AG04450 (cell line): ENCODE measurements at regions of chr12 and their contacts with region 1.

Region 1: DNA sequence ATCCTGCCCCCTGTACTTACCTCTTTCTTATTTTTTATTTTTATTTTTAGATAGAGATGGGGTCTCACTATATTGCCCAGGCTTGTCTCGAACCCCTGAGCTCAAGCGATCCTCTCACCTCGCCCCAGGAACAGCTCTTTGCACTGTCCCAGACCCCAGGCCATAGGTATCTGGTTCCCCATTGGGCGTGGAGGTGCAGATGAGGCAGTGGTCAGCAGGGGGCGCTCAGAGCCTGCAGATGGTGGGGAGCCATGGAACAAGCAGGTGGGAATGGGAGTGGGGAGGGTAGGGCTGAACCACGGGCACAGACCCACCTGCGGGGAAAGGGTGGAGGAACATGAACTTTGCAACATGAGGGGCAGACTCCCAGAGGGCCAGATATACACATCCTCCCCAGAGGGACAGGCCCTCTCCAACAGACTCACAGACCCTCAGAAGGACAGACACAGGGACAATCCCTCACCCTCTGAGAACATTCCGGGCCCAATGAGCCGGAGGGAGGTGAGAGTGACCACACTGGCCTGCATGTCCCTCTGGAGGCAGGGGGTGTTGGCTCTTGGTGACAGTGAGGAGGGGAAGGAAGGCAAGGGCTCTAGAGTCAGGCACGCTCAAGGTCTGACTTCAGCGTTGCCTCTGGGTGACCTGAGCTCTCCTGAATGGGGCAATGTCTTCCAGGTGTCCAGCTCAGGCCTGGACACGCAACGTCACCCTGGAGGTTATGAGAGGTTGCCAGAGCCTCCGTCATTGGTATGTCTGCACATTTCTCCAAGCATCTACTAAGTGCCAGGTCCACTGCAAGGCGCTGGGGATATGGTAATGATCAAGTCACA is 34.9 kb downstream of the KRT80 start:
- DNase-seq: no peak
- H3K4me3 ChIP-seq: no peak overlapping the region
- H3K27ac ChIP-seq: no peak overlapping the region
- H3K27me3 ChIP-seq: no peaks in the 10 kb centered on the region
- CTCF ChIP-seq: peak; percentile 96

Region 2: GRCh38 chr12:52182898-52183543 is 26.1 kb after region 1 on chr12:
- CTCF ChIA-PET with region 1: no interaction called
- POLR2A ChIA-PET with region 1: no interaction called
- DNase-seq: no peak
- H3K4me3 ChIP-seq: no peak overlapping the region
- H3K27ac ChIP-seq: peak overlapping the region; percentile 34
- H3K27me3 ChIP-seq: no peaks in the 10 kb centered on the region
- CTCF ChIP-seq: no peak

Region 3: DNA sequence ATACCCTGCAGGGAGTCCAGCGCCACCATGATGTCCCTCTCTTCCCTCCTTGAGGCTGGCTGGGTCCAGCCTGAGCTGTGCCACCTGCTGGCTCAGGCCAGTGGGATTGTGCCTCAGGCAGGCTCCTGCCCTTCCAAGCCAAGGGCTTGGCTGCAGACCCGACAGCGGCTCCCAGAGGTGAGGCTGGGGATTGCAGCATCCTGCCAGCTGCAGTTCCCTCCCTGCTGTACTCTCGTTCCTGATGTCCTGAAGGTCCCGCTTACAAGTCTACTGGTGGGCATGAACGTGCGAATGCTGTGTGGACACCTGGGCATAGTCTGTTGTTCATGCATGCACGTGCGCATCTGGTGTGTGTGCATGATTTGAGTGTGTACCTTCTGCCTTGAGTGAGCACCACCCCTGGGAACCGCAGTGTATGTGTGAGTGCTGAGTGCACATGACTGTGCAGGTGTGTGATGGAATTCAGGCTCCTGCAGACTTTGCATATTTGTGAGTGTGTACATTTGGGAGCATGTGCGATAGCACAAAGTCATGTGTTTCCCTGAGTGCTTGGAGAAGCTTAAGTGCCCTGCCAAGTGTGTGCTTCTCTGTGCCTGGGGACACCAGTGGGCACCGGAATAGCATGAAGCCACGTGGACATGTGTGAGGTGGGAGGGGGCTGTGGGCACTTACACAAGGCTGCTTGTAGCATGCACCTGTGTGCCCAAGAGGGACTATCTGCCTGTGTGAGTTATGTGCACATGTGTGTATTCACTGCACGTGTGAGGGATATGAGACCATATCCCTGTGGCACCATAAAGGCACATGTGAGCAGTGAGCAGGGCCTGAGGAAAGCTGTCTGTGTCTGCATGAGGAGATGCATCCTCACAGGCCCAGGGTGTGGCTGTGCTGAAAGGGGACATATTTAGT is 56.8 kb after region 1 on chr12:
- CTCF ChIA-PET with region 1: interaction called, 50 read pairs
- POLR2A ChIA-PET with region 1: no interaction called
- DNase-seq: peak; percentile 61
- H3K4me3 ChIP-seq: no peak overlapping the region
- H3K27ac ChIP-seq: no peak overlapping the region
- H3K27me3 ChIP-seq: no peaks in the 10 kb centered on the region
- CTCF ChIP-seq: peak; percentile 99

Region 4: GRCh38 chr12:52307836-52308805 is 151.2 kb after region 1 on chr12:
- CTCF ChIA-PET with region 1: interaction called, 17 read pairs
- POLR2A ChIA-PET with region 1: no interaction called
- DNase-seq: no peak
- H3K4me3 ChIP-seq: peak overlapping the region; percentile 54
- H3K27ac ChIP-seq: no peak overlapping the region
- H3K27me3 ChIP-seq: peaks cover 53% of the 10 kb centered on the region
- CTCF ChIP-seq: no peak

Region 5: DNA sequence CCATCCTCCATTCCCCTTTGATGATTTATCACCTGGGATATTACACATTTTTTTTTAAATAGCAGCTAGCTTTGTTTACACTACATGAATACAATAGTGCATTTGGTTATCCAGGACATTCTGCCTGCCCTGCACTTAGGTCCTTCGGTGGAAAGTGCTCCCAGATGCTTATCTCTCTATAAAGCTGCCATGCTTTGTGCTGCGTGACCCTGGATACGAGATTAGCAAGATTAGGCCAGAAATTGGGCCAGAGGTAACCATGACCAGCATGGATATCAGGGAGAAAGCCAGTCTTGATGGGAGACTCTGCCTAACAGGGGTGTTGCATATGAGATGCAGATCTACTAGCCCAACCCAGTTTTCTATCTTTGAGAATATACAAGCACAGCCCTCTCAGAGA is 176.4 kb after region 1 on chr12:
- CTCF ChIA-PET with region 1: interaction called, 103 read pairs
- POLR2A ChIA-PET with region 1: no interaction called
- DNase-seq: no peak
- H3K4me3 ChIP-seq: no peak overlapping the region
- H3K27ac ChIP-seq: no peak overlapping the region
- H3K27me3 ChIP-seq: peaks cover 33% of the 10 kb centered on the region
- CTCF ChIP-seq: no peak

Region 6: DNA sequence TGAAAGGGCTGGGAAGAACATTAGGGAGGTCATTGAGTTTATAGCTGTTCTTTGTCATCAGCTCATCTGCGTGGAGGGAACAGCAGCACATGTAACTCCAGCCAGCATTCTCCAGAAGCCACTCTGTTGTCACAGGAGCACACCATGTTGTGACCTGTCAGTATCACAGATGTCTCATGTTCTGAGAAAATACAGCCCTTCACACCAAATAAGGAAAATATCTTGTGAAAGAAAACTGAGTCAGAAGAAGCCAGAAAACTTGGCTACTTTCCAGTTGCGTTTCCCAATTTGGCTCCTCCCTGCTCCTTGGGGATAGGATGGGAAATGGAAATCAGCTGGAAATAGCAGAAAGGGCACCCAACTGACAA is 259.4 kb after region 1 on chr12:
- CTCF ChIA-PET with region 1: no interaction called
- POLR2A ChIA-PET with region 1: no interaction called
- DNase-seq: peak; percentile 21
- H3K4me3 ChIP-seq: no peak overlapping the region
- H3K27ac ChIP-seq: no peak overlapping the region
- H3K27me3 ChIP-seq: peaks cover 7% of the 10 kb centered on the region
- CTCF ChIP-seq: no peak

Region 7: GRCh38 chr12:52506858-52507715 is 350.1 kb after region 1 on chr12:
- CTCF ChIA-PET with region 1: interaction called, 15 read pairs
- POLR2A ChIA-PET with region 1: no interaction called
- DNase-seq: peak; percentile 24
- H3K4me3 ChIP-seq: no peak overlapping the region
- H3K27ac ChIP-seq: no peak overlapping the region
- H3K27me3 ChIP-seq: peaks cover 7% of the 10 kb centered on the region
- CTCF ChIP-seq: peak; percentile 71